ENCODE measurements at regions of chr9 and their contacts with region 1.

Region 1: GRCh38 chr9:104927912-104928740 is at the start of gene ABCA1:
- DNase-seq: peak; percentile 80 to 85
- H3K4me3 ChIP-seq: peak within 1 kb of the TSS; percentile 73
- H3K4me3 Mint-ChIP-seq: peak within 1 kb of the TSS; percentile 94
- H3K27ac Mint-ChIP-seq: peak within 1 kb of the TSS; percentile 51
- H3K4me1 ChIP-seq: peaks cover 9% of the 10 kb centered on the region
- H3K4me1 Mint-ChIP-seq: peaks cover 13% of the 10 kb centered on the region
- H3K27me3 ChIP-seq: no peaks in the 10 kb centered on the region
- H3K27me3 Mint-ChIP-seq: no peaks in the 10 kb centered on the region
- CTCF ChIP-seq: no peak
- total RNA-seq, gene ABCA1: 14.0 and 20.7 TPM in 2 replicates

Region 2: GRCh38 chr9:104780799-104781395 is 147.2 kb before region 1 on chr9:
- CTCF ChIA-PET with region 1: interaction called, 4 read pairs
- POLR2A ChIA-PET with region 1: no interaction called
- intact Hi-C with region 1: loop called (anchors 5 kb)
- DNase-seq: peak in 1 of 2 experiments; percentile 17
- H3K4me3 ChIP-seq: no peak overlapping the region
- H3K4me3 Mint-ChIP-seq: no peak overlapping the region
- H3K27ac Mint-ChIP-seq: no peak overlapping the region
- H3K4me1 ChIP-seq: no peaks in the 10 kb centered on the region
- H3K4me1 Mint-ChIP-seq: no peaks in the 10 kb centered on the region
- H3K27me3 ChIP-seq: no peaks in the 10 kb centered on the region
- H3K27me3 Mint-ChIP-seq: no peaks in the 10 kb centered on the region
- CTCF ChIP-seq: peak; percentile 21 to 29

Region 3: DNA sequence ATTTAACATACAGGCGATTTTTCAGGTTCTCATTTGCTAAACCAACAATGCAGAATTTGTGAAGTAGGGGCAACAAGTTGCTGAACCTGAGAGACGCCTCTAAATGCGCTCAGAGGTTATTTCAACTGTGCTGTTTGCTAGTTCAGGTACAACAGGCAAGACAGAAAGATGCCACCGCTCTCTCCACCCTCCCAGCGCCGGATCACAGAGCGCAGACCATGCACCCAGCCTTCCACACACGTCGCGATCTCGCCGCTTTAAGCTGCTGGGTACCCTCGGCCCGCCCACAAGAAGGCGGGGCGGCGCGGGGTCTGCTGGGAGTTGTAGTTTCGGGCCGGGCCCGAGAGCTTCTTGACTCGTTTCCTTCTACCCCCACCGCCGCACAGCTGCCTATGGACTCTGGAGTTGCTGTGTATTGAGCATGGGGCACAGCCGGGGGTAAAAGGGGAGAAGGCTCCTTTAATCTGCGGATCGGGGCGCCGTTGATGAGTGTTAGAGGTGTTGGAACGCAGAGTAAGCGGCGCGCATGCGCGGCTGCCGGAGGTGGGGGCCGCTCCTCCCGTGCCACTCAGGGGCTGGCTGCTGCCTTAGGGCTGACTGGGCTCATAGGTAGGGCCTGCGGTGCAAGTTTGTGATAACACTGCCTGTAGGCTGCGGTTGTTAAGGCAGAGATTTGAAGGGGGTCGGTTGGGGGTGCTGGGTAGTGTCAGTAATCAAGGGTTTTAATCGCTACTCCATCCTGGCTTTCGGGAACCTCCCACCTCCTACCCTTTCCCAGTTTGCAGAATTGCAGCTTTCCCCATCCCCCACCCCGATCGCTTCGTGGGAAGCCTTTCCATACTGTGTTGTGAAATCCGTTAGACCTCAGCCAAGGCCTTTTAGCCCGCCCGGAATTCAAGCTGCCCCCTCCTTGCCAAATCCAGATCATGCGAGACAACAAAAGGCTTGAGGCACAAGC is 40.2 kb after region 1 on chr9:
- CTCF ChIA-PET with region 1: interaction called, 10 read pairs
- POLR2A ChIA-PET with region 1: no interaction called
- intact Hi-C with region 1: loop called (anchors 1 kb)
- DNase-seq: peak; percentile 87 to 90
- H3K4me3 ChIP-seq: peak overlapping the region; percentile 77
- H3K4me3 Mint-ChIP-seq: peak overlapping the region; percentile 89
- H3K27ac Mint-ChIP-seq: peak overlapping the region; percentile 82
- H3K4me1 ChIP-seq: peaks cover 22% of the 10 kb centered on the region
- H3K4me1 Mint-ChIP-seq: peaks cover 37% of the 10 kb centered on the region
- H3K27me3 ChIP-seq: no peaks in the 10 kb centered on the region
- H3K27me3 Mint-ChIP-seq: no peaks in the 10 kb centered on the region
- CTCF ChIP-seq: no peak

Region 4: DNA sequence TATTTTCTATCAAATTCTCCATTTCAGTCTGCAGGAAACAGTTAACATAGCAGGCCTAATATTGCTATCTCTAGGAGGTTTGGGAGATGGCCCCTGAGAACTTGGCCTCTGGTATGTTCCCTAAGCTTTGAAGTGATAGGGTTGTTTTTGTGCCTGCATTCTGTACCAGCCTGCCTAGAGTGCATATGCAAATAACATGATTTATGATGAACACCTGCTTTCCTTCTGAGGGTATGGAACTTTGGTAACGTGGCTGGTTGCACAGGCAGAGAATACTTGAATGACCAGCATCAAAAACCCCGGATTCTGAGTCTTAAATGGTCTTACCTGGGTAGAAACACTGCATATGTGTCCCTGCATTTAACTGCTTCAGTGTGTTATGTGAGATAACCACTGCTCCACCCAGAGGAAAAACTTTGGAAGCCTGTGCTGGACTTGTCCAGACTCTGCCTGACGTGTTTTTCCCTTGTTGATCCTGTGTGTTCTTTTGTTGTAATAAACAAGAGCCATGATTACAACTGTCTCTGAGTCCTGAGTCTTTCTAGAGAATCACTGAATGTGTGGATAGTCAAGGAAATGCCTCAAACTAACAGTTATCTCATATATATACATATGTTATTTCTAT is 111.2 kb after region 1 on chr9:
- CTCF ChIA-PET with region 1: no interaction called
- POLR2A ChIA-PET with region 1: no interaction called
- intact Hi-C with region 1: loop called (anchors 2 kb)
- DNase-seq: peak in 1 of 2 experiments; percentile 30
- H3K4me3 ChIP-seq: no peak overlapping the region
- H3K4me3 Mint-ChIP-seq: no peak overlapping the region
- H3K27ac Mint-ChIP-seq: peak overlapping the region; percentile 51
- H3K4me1 ChIP-seq: peaks cover 26% of the 10 kb centered on the region
- H3K4me1 Mint-ChIP-seq: peaks cover 28% of the 10 kb centered on the region
- H3K27me3 ChIP-seq: no peaks in the 10 kb centered on the region
- H3K27me3 Mint-ChIP-seq: no peaks in the 10 kb centered on the region
- CTCF ChIP-seq: no peak

Region 5: GRCh38 chr9:105064315-105065097 is 136.4 kb after region 1 on chr9:
- CTCF ChIA-PET with region 1: interaction called, 5 read pairs
- POLR2A ChIA-PET with region 1: no interaction called
- intact Hi-C with region 1: loop called (anchors 5 kb)
- DNase-seq: peak; percentile 86 to 92
- H3K4me3 ChIP-seq: no peak overlapping the region
- H3K4me3 Mint-ChIP-seq: peak overlapping the region; percentile 35
- H3K27ac Mint-ChIP-seq: peak overlapping the region; percentile 90
- H3K4me1 ChIP-seq: peaks cover 27% of the 10 kb centered on the region
- H3K4me1 Mint-ChIP-seq: peaks cover 31% of the 10 kb centered on the region
- H3K27me3 ChIP-seq: no peaks in the 10 kb centered on the region
- H3K27me3 Mint-ChIP-seq: no peaks in the 10 kb centered on the region
- CTCF ChIP-seq: no peak

Region 6: DNA sequence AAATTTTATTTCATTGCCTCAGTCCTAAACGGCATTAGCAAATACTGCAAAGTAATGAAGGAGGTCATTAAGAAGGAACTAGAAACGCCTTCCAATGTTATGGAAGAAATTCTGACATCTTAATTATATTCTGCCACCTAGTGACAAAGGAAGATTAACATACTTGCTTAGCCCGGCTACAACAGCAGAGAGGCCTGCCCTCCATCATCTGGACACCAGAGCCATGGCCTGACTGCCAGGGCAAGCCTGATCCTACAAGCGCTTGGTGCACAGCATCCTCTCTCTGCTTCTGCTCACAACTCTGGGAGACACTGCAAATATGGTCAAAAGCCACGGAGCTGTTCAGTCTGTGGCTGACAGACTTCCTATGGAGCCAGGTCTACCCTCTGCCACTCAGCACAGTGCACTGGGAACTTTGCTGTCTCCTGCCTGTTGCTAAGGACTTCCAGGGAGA is 229.0 kb after region 1 on chr9:
- CTCF ChIA-PET with region 1: no interaction called
- POLR2A ChIA-PET with region 1: no interaction called
- intact Hi-C with region 1: loop called (anchors 1 kb)
- DNase-seq: peak in 1 of 2 experiments; percentile 52
- H3K4me3 ChIP-seq: no peak overlapping the region
- H3K4me3 Mint-ChIP-seq: no peak overlapping the region
- H3K27ac Mint-ChIP-seq: no peak overlapping the region
- H3K4me1 ChIP-seq: 0 out of 2 replicates have a peak, but pooled peaks cover 4% of the 10 kb centered on the region
- H3K4me1 Mint-ChIP-seq: no peaks in the 10 kb centered on the region
- H3K27me3 ChIP-seq: no peaks in the 10 kb centered on the region
- H3K27me3 Mint-ChIP-seq: no peaks in the 10 kb centered on the region
- CTCF ChIP-seq: peak; percentile 32 to 35

Region 7: DNA sequence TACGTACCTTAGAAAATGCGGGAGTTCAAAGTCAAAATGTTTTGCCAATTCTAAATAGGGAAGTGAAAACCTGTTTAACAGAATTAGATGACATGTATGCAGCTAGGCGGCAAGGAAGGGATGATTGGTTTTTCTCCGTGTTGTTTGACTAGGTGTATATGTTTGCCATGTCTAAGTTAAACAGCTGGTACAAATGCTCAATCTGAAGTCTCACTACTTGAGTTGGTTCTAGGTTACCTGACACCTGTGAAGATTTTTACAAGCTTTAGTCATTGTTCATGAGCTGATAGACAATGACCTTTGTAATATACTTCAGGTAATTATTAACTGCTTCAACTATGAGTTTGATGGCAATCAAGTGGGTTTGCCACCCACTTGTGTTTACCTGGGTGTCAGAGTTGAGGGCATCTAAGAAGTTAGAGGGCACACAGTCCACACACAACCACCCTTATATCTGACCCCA is 390.6 kb after region 1 on chr9:
- CTCF ChIA-PET with region 1: interaction called, 12 read pairs
- POLR2A ChIA-PET with region 1: no interaction called
- intact Hi-C with region 1: no loop called
- DNase-seq: peak; percentile 63 to 65
- H3K4me3 ChIP-seq: no peak overlapping the region
- H3K4me3 Mint-ChIP-seq: peak overlapping the region; percentile 62
- H3K27ac Mint-ChIP-seq: peak overlapping the region; percentile 85
- H3K4me1 ChIP-seq: peaks cover 36% of the 10 kb centered on the region
- H3K4me1 Mint-ChIP-seq: peaks cover 32% of the 10 kb centered on the region
- H3K27me3 ChIP-seq: no peaks in the 10 kb centered on the region
- H3K27me3 Mint-ChIP-seq: no peaks in the 10 kb centered on the region
- CTCF ChIP-seq: no peak